ENCODE measurements at regions of chr1 and their contacts with region 1.

Region 1: DNA sequence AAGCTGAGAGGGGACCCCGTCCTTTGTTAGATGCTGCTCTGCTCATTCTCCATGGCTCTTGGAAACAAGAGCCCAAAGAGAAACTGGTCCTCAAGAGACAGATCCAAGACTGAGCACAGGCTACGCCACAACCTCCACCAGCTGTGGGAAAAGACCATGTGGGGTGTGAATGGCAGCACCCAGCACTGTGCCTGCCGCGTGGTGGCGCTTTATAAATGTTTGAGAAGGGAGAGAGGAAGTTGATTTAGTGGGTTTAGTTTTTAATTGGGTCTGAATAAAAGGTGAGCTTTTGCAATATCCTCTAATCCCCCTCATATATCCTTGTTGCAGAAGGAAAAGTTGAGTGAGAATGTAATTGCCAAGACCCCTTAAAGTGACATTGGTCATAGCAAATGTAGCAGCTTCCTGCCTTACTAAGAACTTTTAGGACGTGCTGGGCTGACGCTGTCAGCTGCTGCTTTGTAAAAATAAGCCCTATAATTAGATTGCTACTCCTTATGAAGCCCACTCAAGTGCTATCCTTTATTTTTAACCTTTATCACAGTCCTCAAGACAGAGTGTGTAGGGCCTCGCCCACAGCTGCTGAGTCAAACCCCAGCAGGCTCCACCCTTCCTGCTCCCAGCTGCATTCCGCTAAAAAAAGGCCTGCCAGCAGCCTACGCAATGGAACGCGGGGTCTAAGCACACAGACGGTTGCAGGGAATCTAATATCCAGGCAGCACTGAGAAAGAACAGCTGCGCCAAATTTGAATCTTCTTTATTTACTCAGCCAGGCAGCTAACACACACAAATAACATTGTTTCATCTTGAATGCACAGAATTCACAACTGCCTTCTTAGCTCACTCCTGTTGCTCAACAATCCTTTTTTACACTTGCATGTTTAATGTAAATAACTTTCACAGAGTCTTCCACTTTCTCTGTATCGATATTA is 47.4 kb upstream of the PRDX6 start:
- DNase-seq: peak; percentile 36 to 66 (median 54)
- ATAC-seq: peak; percentile 87
- H3K4me3 ChIP-seq: peak overlapping the region; percentile 9
- H3K4me3 Mint-ChIP-seq: peak overlapping the region; percentile 29 to 76 (median 60)
- H3K27ac ChIP-seq: peak overlapping the region; percentile 43
- H3K27ac Mint-ChIP-seq: peak overlapping the region; percentile 23 to 86 (median 51)
- H3K4me1 ChIP-seq: peaks cover 14% of the 10 kb centered on the region in 2 donors
- H3K4me1 Mint-ChIP-seq: peaks cover 13 to 35% (median 24%) of the 10 kb centered on the region in 7 donors
- H3K27me3 ChIP-seq: no peaks in the 10 kb centered on the region
- H3K27me3 Mint-ChIP-seq: no peaks in the 10 kb centered on the region

Region 2: DNA sequence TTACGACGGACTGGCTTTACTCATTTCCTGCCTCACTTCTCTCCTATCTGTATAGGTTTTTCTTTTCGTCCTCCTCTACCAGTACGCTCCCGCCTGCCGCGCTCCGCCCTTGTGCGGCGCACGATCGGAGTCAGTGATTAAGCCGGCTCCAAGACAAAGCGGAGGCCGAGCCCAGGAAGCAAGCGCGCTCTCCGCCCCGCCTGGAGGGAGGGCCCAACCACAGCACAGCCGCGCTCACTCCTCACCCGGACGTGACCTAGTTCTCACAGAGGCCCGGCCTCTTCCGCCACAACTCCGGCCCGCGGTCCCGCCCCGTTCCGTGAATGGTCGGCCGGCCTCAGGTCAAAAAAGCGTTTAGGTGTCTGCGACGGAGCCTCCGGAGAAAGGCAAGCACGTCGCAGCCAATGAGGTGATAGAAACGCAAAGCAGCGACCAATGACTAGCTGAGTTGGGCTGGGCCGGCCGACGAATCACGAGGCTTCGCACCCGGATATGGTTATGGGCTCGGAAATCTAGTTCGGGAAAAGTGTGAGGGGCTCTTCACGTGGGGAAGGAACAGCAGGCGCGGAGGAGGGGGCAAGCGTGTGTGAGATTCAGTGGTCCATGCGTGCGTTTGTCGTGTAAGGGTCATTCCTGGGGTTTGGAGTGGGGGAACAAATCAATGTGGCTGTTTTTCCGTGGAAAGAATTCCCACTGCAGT is 1648.4 kb before region 1 on chr1 and contains the start of gene METTL13:
- CTCF ChIA-PET with region 1: no interaction called
- POLR2A ChIA-PET with region 1: no interaction called
- intact Hi-C with region 1: loop called in 1 of 2 experiments (anchors 1 kb)
- DNase-seq: peak; percentile 89 to 100 (median 99)
- ATAC-seq: peak; percentile 95
- H3K4me3 ChIP-seq: peak within 1 kb of the TSS; percentile 95
- H3K4me3 Mint-ChIP-seq: peak within 1 kb of the TSS; percentile 90 to 99 (median 94)
- H3K27ac ChIP-seq: peak within 1 kb of the TSS; percentile 74
- H3K27ac Mint-ChIP-seq: peak within 1 kb of the TSS; percentile 93 to 99 (median 96)
- H3K4me1 ChIP-seq: peaks cover 20 to 41% of the 10 kb centered on the region in 2 donors
- H3K4me1 Mint-ChIP-seq: peaks cover 28 to 65% (median 58%) of the 10 kb centered on the region in 7 donors
- H3K27me3 ChIP-seq: no peaks in the 10 kb centered on the region
- H3K27me3 Mint-ChIP-seq: no peaks in the 10 kb centered on the region
- total RNA-seq, gene METTL13: 15.6 to 50.7 (median 34.5) TPM

Region 3: DNA sequence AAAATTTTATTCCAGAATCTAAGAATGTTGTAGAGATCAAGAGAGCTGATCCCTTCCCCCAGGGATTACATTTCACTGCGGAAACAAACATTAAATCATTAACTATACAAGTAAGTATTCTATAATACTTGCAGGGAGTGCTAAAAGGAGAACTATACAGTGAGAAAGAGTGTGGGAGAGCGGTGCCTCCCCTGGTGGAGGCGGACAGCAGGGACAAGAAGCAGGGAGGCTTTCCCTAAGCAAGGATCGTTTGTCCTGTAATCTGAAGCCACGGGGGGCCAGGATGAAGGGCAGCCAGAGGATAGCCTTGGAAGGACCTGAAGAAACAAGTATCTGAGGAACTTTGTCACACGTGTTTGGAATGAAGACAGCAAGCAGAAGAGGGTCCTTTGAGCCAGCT is 133.1 kb after region 1 on chr1:
- CTCF ChIA-PET with region 1: no interaction called
- POLR2A ChIA-PET with region 1: no interaction called
- intact Hi-C with region 1: loop called in 1 of 2 experiments (anchors 10 kb)
- DNase-seq: no peak
- ATAC-seq: no peak
- H3K4me3 ChIP-seq: no peak overlapping the region
- H3K4me3 Mint-ChIP-seq: no peak overlapping the region
- H3K27ac ChIP-seq: no peak overlapping the region
- H3K27ac Mint-ChIP-seq: no peak overlapping the region
- H3K4me1 ChIP-seq: no peaks in the 10 kb centered on the region
- H3K4me1 Mint-ChIP-seq: peaks cover 0 to 22% (median 9%) of the 10 kb centered on the region in 7 donors
- H3K27me3 ChIP-seq: no peaks in the 10 kb centered on the region
- H3K27me3 Mint-ChIP-seq: peaks cover 0 to 35% (median 8%) of the 10 kb centered on the region in 5 donors

Region 4: DNA sequence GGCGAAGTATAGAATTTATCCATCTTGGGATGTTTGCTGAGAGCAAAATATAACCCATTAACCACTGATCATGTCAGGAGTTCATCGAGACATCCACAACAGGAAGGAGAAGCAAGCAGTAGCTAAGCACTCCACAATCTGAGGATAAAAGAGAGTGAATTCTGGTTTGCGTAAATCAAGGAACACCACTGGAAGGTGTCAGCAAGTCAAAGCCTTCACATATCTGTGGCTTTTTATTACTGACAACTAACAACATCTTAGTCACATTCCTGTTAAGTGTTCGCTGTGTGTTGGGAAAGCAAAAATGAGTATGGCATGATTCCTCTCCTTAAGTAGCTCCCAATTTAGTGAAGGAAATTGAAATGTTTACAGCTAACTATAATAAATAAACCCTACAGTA is 350.2 kb after region 1 on chr1:
- CTCF ChIA-PET with region 1: no interaction called
- POLR2A ChIA-PET with region 1: no interaction called
- intact Hi-C with region 1: loop called in 1 of 2 experiments (anchors 5 kb)
- DNase-seq: no peak
- ATAC-seq: no peak
- H3K4me3 ChIP-seq: no peak overlapping the region
- H3K4me3 Mint-ChIP-seq: no peak overlapping the region
- H3K27ac ChIP-seq: no peak overlapping the region
- H3K27ac Mint-ChIP-seq: peak overlapping the region in 3 of 9 donors; percentile 20 to 34 (median 25)
- H3K4me1 ChIP-seq: no peaks in the 10 kb centered on the region
- H3K4me1 Mint-ChIP-seq: peaks cover 0 to 19% (median 6%) of the 10 kb centered on the region in 7 donors
- H3K27me3 ChIP-seq: no peaks in the 10 kb centered on the region
- H3K27me3 Mint-ChIP-seq: no peaks in the 10 kb centered on the region

Region 5: GRCh38 chr1:173937062-173937461 is 507.3 kb after region 1 on chr1:
- CTCF ChIA-PET with region 1: no interaction called
- POLR2A ChIA-PET with region 1: no interaction called
- intact Hi-C with region 1: loop called in 1 of 2 experiments (anchors 5 kb)
- DNase-seq: no peak
- ATAC-seq: no peak
- H3K4me3 ChIP-seq: no peak overlapping the region
- H3K4me3 Mint-ChIP-seq: no peak overlapping the region
- H3K27ac ChIP-seq: no peak overlapping the region
- H3K27ac Mint-ChIP-seq: no peak overlapping the region
- H3K4me1 ChIP-seq: no peaks in the 10 kb centered on the region
- H3K4me1 Mint-ChIP-seq: peaks cover 0 to 4% (median 0%) of the 10 kb centered on the region in 7 donors
- H3K27me3 ChIP-seq: no peaks in the 10 kb centered on the region
- H3K27me3 Mint-ChIP-seq: no peaks in the 10 kb centered on the region

Region 6: GRCh38 chr1:174217787-174218574 is 788.2 kb after region 1 on chr1:
- CTCF ChIA-PET with region 1: interaction called, 8 read pairs
- POLR2A ChIA-PET with region 1: no interaction called
- intact Hi-C with region 1: loop called (anchors 1 to 5 kb)
- DNase-seq: peak in 6 of 9 donors; percentile 2 to 46 (median 34)
- ATAC-seq: peak; percentile 69
- H3K4me3 ChIP-seq: no peak overlapping the region
- H3K4me3 Mint-ChIP-seq: no peak overlapping the region
- H3K27ac ChIP-seq: no peak overlapping the region
- H3K27ac Mint-ChIP-seq: no peak overlapping the region
- H3K4me1 ChIP-seq: no peaks in the 10 kb centered on the region
- H3K4me1 Mint-ChIP-seq: peaks cover 0 to 8% (median 0%) of the 10 kb centered on the region in 7 donors
- H3K27me3 ChIP-seq: no peaks in the 10 kb centered on the region
- H3K27me3 Mint-ChIP-seq: no peaks in the 10 kb centered on the region